ENCODE measurements at regions of chr11 and their contacts with region 1.

Region 1: DNA sequence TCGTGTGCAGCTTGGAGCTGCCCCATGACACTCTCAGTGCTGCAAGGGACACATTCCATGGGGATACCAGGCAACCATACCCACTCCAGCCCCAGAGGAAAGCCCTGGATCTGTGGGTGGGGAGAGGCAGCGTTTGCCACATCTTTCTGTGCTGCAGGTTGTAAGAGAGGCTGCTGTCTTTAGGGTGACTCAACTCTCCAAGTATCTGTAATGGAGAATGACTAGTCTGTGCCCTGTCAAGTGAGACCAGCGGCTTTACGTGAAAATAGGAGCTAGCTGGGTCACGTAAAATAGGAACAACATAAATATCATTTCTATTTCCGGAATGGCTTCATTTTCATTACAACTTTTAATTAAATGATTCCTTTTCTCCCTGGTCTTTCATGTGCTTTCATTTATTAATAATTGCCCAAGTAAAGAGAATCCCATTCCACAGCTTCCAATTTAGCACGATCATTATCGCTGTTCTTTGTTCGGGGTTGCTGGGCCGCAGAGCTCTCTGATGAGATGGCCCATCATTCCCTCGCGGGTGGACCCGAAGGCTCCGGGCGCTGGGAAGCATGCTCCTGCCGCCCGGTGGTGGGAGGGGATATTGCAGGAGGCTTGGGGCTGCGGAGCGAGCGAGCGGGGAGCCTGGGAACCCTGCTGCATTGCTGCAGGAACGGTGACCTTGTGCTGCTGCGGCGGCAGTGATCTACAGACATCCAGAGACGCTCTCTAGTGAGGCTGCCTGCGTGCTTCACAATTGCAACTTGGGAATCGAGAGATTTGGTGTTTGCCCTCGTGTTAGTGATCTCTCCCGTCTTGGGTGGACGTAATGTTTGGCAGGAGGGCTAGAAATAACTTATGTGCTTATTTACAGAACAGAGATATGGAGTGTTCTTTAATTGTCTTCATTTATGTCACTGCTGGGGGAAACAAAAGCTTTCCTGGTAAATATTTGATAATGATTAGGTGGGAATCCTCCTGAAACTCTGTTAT is 10.6 kb downstream of the SLC6A5 start:
- DNase-seq: peak; percentile 90
- H3K4me3 ChIP-seq: peak overlapping the region in 1 of 2 experiments; percentile 45; a peak in 2 of 4 replicates
- H3K27ac ChIP-seq: peak overlapping the region in 1 of 2 experiments; percentile 16; a peak in 1 of 4 replicates
- H3K4me1 ChIP-seq: peaks cover 0 to 19% of the 10 kb centered on the region in 2 experiments; a peak in 1 of 4 replicates
- H3K27me3 ChIP-seq: no peaks in the 10 kb centered on the region
- CTCF ChIP-seq: peak; percentile 82
- EP300 ChIP-seq: no peak; a peak in 1 of 4 replicates
- RAD21 ChIP-seq: peak; percentile 99

Region 2: GRCh38 chr11:20355221-20356219 is 254.5 kb before region 1 on chr11:
- CTCF ChIA-PET with region 1: interaction called, 34 read pairs
- POLR2A ChIA-PET with region 1: no interaction called
- DNase-seq: peak; percentile 56
- H3K4me3 ChIP-seq: no peak overlapping the region; a peak in 1 of 4 replicates
- H3K27ac ChIP-seq: no peak overlapping the region
- H3K4me1 ChIP-seq: no peaks in the 10 kb centered on the region; a peak in 1 of 4 replicates
- H3K27me3 ChIP-seq: no peaks in the 10 kb centered on the region
- CTCF ChIP-seq: peak; percentile 72
- EP300 ChIP-seq: no peak
- RAD21 ChIP-seq: peak; percentile 60

Region 3: GRCh38 chr11:20387241-20388095 is 222.5 kb before region 1 on chr11 and contains the start of gene PRMT3:
- CTCF ChIA-PET with region 1: interaction called, 17 read pairs
- POLR2A ChIA-PET with region 1: interaction called, 4 read pairs
- DNase-seq: peak; percentile 97
- H3K4me3 ChIP-seq: peak within 1 kb of the TSS; percentile 91 to 93
- H3K27ac ChIP-seq: peak within 1 kb of the TSS; percentile 88 to 94
- H3K4me1 ChIP-seq: peaks cover 5 to 6% of the 10 kb centered on the region in 2 experiments; a peak in 2 of 4 replicates
- H3K27me3 ChIP-seq: no peaks in the 10 kb centered on the region
- CTCF ChIP-seq: peak; percentile 99
- EP300 ChIP-seq: 0 out of 4 replicates have a peak, but pooled peaks of 1 of the 2 experiments have one; percentile 32
- RAD21 ChIP-seq: peak; percentile 62
- polyA plus RNA-seq, gene PRMT3: 10.8 and 14.9 TPM in 2 replicates

Region 4: DNA sequence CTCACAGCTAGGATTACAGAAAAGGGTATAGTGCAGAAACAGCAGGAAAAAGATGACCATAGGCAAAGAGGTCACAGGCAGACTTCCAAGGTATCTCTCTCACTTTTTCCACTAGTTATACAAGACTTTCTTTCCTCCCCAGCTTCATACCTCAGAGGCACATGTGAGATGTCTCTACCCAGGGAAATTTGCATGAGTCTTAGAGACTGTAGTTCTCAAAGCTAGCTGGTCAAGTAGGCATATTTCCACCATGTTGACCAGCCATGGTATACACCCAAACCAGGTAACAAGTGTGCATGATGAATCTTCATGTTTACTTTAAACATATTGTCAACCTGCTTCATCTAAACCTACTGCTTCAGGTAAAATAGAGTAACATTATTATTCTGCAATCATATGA is 194.6 kb before region 1 on chr11:
- CTCF ChIA-PET with region 1: interaction called, 21 read pairs
- POLR2A ChIA-PET with region 1: no interaction called
- DNase-seq: no peak
- H3K4me3 ChIP-seq: no peak overlapping the region
- H3K27ac ChIP-seq: no peak overlapping the region
- H3K4me1 ChIP-seq: peaks cover 0 to 8% of the 10 kb centered on the region in 2 experiments; a peak in 2 of 4 replicates
- H3K27me3 ChIP-seq: no peaks in the 10 kb centered on the region
- CTCF ChIP-seq: no peak
- EP300 ChIP-seq: no peak
- RAD21 ChIP-seq: no peak

Region 5: GRCh38 chr11:20535271-20535881 is 74.6 kb before region 1 on chr11:
- CTCF ChIA-PET with region 1: interaction called, 10 read pairs
- POLR2A ChIA-PET with region 1: no interaction called
- DNase-seq: no peak
- H3K4me3 ChIP-seq: no peak overlapping the region
- H3K27ac ChIP-seq: no peak overlapping the region
- H3K4me1 ChIP-seq: peaks cover 0 to 11% of the 10 kb centered on the region in 2 experiments; a peak in 2 of 4 replicates
- H3K27me3 ChIP-seq: no peaks in the 10 kb centered on the region
- CTCF ChIP-seq: no peak
- EP300 ChIP-seq: no peak
- RAD21 ChIP-seq: no peak

Region 6: DNA sequence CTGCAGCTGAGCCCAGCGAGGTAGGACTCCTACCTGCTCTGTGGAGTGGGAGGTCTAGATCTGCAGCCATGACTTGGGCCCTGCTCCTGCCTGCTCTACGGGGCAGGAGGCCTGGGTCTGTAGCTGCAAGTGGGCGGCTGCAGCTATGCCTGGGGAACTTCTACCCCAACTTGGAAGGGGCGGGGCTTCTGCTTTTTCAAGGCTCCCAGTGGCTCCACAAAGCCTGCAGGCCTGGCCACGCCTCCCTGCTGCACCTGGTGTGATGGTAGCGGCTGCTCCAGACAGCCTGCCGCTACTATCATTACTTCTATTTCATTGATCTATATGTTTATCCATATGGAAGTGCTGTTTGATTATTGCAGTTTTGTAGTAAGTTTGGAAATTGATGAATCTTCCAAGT is 180.6 kb after region 1 on chr11:
- CTCF ChIA-PET with region 1: no interaction called
- POLR2A ChIA-PET with region 1: no interaction called
- DNase-seq: no peak
- H3K4me3 ChIP-seq: no peak overlapping the region
- H3K27ac ChIP-seq: no peak overlapping the region
- H3K4me1 ChIP-seq: peaks cover 0 to 6% of the 10 kb centered on the region in 2 experiments; a peak in 1 of 4 replicates
- H3K27me3 ChIP-seq: no peaks in the 10 kb centered on the region
- CTCF ChIP-seq: no peak
- EP300 ChIP-seq: no peak
- RAD21 ChIP-seq: no peak